Cardiac septum (tissue), 1 donor: ENCODE measurements at regions of chrX and their contacts with region 1.

Region 1: DNA sequence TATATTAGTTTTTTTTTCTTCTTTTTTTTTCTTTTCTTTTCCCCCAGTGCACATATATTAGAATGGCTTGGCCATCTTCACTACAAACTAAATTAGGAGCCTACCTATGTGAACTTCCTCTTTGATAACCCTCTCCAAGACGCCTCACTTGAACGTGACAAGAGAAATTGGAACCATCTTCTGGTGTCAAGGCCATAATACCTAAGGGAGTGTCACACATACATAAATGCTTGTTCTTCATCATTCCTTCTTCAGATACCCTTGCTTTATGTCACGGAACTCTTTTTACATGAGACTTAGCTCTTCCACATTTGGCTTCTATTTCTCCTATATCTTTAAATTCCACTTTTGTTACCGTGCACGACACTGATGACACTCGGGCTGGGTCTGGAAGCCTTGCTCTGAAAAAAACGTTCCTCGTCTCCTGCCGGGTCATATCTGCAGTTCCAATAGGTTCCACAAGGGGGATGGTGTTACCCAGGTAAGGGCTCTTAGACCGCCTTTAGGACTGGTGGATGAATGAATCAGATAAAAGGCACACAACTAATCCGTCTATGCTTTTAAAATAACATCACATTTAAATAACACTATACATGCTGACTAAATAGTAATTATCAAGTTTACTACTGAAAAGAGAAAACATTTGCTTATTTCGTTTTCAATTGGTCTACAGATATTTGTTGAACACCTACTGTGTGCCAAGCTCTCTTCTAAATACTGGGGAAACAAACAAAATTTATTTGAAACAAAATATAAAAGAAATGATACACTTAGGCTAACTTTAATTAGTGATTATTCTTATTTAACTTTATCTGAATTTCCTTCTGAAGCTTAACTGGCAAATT is 19.9 kb downstream of the DGAT2L6 start:
- DNase-seq: no peak

Region 2: DNA sequence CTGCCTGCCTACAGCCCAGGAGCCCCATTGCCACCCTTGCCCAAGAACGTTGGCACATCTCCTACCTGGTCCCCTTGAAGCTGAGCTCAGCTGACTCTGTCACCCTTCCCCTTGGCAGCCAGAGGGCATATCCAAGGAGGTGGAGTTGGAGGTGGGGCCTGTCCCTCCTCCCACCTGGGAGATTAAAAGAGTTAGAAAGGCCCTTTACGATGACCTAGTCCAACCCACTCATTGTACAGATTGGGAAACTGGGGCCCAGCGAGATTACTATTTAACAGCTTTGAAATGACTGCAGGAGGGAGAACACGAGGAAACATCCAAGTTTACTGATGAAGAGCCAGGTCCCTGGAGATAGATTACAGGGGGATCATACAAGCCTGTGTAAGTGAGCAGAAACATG is 62.9 kb after region 1 on chrX and contains the start of gene P2RY4:
- intact Hi-C with region 1: loop called (anchors 2 kb)
- DNase-seq: no peak
- total RNA-seq, gene P2RY4: 0.24 TPM

Region 3: GRCh38 chrX:70313503-70313902 is 116.3 kb after region 1 on chrX:
- intact Hi-C with region 1: no loop called
- DNase-seq: no peak